GM18951 (cell line): ENCODE measurements at regions of chr2 and their contacts with region 1.

Region 1: DNA sequence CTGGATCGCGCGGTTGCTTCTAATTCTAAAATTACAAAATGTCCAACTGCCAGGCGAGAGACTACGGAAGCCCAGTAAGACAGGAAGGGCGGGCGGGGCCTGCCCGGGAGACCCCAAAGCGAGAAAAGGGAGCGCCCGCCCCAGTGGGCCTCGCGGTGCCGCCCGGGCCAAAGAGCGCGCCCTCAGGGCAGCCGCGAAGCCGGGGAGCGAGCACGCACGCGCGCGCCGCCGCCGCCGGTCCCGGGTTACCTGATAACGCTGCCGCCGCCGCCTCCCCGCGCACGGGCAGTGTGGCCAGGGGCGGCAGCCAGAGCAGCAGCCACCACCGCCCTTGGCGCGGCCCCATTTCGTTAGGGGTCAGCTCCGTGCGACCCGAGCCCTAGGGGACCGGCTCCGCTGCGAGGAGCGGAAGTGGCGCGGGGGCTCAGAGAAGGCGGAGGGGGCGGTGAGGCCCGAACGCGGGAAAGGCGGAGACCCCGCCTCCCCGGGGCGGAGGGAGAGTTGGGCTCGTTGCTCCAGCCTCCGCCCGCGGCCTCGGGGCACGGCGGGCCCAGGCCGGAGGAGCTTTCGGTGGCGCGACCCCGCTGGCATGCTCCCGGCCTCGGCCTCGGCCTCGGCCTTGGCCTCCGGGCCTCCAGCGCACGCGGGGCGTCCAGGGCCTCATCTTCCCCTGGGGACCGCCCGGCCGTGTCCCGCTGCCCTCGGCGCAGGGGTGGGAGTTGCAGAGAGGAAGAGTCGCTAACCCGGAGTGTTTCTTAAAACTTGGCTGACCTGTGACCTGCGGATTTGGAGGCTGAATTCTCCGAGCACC is at the start of gene NEMP2:
- POLR2A ChIP-seq: peak; percentile 94

Region 2: DNA sequence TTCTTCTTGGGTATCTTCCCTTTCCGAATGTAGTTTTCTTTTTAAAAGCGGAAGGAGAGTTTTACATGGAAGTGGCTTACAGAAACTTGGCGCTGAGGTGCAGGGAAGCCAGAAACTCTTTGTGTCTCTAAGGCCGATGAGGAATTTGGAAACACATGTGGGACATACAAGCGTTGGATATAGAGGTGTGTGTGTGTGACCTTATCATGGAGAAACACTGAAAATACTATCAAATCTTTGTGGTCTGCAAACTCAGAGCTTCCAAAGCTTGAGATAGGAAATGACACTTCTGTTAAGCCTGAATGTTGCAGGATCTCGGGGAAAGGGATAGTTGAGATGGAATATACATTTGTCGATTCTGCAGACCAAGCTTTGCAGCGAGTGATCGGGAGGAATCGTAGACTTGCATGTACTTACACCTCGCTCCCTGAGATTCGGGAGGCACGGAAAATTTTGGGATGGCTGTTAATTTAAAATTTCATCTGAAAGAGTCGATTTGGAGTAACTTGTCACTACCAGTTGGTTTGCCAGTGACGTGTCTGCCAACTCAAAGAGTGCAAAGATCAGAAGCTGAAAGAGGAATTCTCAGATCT is 115.4 kb after region 1 on chr2:
- in situ Hi-C with region 1: loop called (anchors 10 kb)
- POLR2A ChIP-seq: no peak